Activated CD4-positive, alpha-beta T cell treated with anti-CD3 and anti-CD28 coated beads, Interleukin-2, amount 10 ng/mL, durations not matched to agents 24 days and 14 days (primary cell): ENCODE measurements at regions of chr12 and their contacts with region 1.

Region 1: GRCh38 chr12:51531978-51532497 is 59.0 kb upstream of the SCN8A start:
- DNase-seq: peak; percentile 94
- H3K4me3 Mint-ChIP-seq: no peak overlapping the region
- H3K27ac Mint-ChIP-seq: no peak overlapping the region
- H3K4me1 Mint-ChIP-seq: peaks cover 7% of the 10 kb centered on the region
- H3K27me3 Mint-ChIP-seq: peaks cover 29% of the 10 kb centered on the region

Region 2: DNA sequence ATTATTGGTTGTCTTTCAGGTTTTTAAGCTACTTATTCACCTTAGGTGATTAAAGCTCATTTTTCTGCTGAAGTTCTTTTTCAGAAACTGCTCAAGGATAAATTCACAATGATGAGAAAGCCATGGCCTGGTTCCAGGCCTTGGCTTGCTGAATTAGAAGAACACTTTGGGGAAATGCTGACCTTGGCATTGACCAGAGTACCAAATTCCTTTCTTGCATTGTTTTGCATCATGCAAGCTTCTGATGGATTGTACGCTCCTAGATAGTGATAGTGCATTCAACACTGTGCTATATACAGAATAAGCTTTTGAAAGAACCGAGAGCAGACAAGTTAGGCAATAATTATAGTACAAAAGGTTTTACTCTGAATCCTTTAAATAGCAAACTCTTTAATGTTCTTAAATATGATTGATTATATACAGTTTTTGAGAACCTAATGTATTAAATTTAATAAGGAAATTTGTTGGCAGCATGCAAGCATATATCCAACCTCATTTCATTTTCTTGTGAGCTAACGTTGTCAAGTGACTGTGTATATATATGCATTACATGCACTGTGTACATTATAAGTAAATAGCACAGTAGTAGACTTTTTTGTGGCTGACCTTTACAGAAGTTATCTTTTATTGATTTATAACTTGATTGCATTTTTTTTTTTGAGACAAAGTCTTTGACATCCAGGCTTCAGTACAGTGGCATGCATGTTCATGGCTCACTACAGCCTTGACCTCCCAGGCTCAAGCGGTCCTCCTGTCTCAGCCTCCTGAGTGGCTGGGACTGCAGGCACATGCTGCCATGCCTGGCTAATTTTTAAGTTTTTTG is 928.0 kb before region 1 on chr12:
- intact Hi-C with region 1: no loop called
- DNase-seq: no peak
- H3K4me3 Mint-ChIP-seq: no peak overlapping the region
- H3K27ac Mint-ChIP-seq: no peak overlapping the region
- H3K4me1 Mint-ChIP-seq: peaks cover 17% of the 10 kb centered on the region
- H3K27me3 Mint-ChIP-seq: no peaks in the 10 kb centered on the region

Region 3: GRCh38 chr12:51482929-51483697 is 48.9 kb before region 1 on chr12:
- intact Hi-C with region 1: loop called (anchors 5 kb)
- DNase-seq: peak; percentile 82
- H3K4me3 Mint-ChIP-seq: peak overlapping the region; percentile 75
- H3K27ac Mint-ChIP-seq: peak overlapping the region; percentile 84
- H3K4me1 Mint-ChIP-seq: peaks cover 43% of the 10 kb centered on the region
- H3K27me3 Mint-ChIP-seq: no peaks in the 10 kb centered on the region

Region 4: GRCh38 chr12:51601241-51601640 is 69.2 kb after region 1 on chr12:
- intact Hi-C with region 1: no loop called
- DNase-seq: peak; percentile 0
- H3K4me3 Mint-ChIP-seq: no peak overlapping the region
- H3K27ac Mint-ChIP-seq: no peak overlapping the region
- H3K4me1 Mint-ChIP-seq: no peaks in the 10 kb centered on the region
- H3K27me3 Mint-ChIP-seq: peaks cover 46% of the 10 kb centered on the region